ENCODE measurements at regions of chr6 and their contacts with region 1.

Region 1: GRCh38 chr6:42043787-42044475 is 6.4 kb upstream of the TAF8 start:
- DNase-seq: peak; percentile 82 to 87 (median 84)
- ATAC-seq: peak; percentile 70
- H3K4me3 ChIP-seq: no peak overlapping the region
- H3K27ac ChIP-seq: peak overlapping the region in 1 of 4 donors; percentile 96
- H3K4me1 ChIP-seq: peaks cover 45% of the 10 kb centered on the region
- H3K27me3 ChIP-seq: no peaks in the 10 kb centered on the region
- CTCF ChIP-seq: peak; percentile 92 to 97 (median 95)
- POLR2A ChIP-seq: no peak

Region 2: DNA sequence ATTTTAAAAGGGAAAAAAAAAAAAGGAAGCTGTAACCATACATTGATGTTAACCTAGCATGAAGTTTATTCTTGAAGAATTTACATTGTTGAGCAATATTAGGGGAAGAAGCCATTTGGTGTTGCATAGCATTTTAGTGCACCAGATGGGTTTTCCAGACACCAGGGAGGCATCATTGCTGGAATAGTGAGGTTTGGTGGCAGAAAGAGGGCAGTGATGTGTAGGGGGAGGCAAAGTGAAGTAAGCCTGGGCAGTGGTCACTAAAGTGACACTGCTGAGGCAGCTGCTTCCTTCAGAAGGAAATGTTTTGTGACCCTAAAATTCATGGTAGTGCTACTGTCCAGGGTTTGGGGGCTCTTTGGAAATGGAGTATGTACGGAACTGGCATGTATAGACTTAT is 253.9 kb before region 1 on chr6:
- intact Hi-C with region 1: loop called (anchors 5 kb)
- DNase-seq: no peak
- ATAC-seq: no peak
- H3K4me3 ChIP-seq: no peak overlapping the region
- H3K27ac ChIP-seq: no peak overlapping the region
- H3K4me1 ChIP-seq: peaks cover 26% of the 10 kb centered on the region
- H3K27me3 ChIP-seq: no peaks in the 10 kb centered on the region
- CTCF ChIP-seq: no peak
- POLR2A ChIP-seq: no peak

Region 3: DNA sequence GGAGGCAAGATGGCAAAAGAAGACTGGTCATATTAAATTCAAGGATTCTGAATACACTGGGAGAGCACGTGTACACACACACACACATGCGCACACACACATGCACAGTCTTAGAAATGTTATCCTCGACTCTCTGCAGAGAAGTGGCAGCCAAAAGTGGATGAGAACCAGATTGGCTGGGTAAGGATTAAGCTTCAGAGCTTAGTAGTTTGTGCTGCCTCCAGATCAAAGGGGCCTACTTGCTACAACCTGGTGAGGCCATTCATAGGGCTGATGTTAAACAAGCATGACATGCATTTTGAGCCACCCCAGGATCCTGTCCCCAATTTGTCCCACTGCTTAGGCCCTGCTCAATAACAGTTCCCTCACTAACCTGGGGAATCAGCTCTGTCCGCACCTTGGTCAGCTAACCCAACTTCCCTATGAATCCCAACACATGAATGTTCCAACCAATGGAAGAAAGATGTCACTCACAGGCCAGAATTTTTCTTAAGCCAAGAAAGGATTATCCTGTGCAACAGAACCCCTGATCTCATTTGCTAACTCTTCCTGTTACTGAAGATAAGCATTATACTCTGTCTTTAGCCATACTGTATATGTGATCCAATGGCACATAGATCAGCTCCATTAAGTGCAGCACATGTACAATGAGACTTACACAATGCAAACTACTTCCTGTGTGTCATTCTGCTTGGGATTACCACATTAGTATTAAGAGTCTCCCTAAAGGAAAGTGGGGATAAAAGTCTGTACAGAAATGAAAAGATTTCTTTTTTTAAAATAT is 225.5 kb before region 1 on chr6:
- intact Hi-C with region 1: no loop called
- DNase-seq: no peak
- ATAC-seq: no peak
- H3K4me3 ChIP-seq: no peak overlapping the region
- H3K27ac ChIP-seq: no peak overlapping the region
- H3K4me1 ChIP-seq: no peaks in the 10 kb centered on the region
- H3K27me3 ChIP-seq: no peaks in the 10 kb centered on the region
- CTCF ChIP-seq: no peak
- POLR2A ChIP-seq: no peak

Region 4: GRCh38 chr6:41846666-41847237 is 197.2 kb before region 1 on chr6:
- intact Hi-C with region 1: loop called (anchors 5 kb)
- DNase-seq: peak; percentile 69 to 76 (median 72)
- ATAC-seq: peak; percentile 87
- H3K4me3 ChIP-seq: no peak overlapping the region
- H3K27ac ChIP-seq: peak overlapping the region in 2 of 4 donors; percentile 11 to 29
- H3K4me1 ChIP-seq: peaks cover 10% of the 10 kb centered on the region
- H3K27me3 ChIP-seq: no peaks in the 10 kb centered on the region
- CTCF ChIP-seq: peak; percentile 41 to 90 (median 84)
- POLR2A ChIP-seq: no peak

Region 5: GRCh38 chr6:41872147-41872546 is 171.8 kb before region 1 on chr6:
- intact Hi-C with region 1: no loop called
- DNase-seq: no peak
- ATAC-seq: no peak
- H3K4me3 ChIP-seq: no peak overlapping the region
- H3K27ac ChIP-seq: no peak overlapping the region
- H3K4me1 ChIP-seq: no peaks in the 10 kb centered on the region
- H3K27me3 ChIP-seq: no peaks in the 10 kb centered on the region
- CTCF ChIP-seq: no peak
- POLR2A ChIP-seq: no peak

Region 6: DNA sequence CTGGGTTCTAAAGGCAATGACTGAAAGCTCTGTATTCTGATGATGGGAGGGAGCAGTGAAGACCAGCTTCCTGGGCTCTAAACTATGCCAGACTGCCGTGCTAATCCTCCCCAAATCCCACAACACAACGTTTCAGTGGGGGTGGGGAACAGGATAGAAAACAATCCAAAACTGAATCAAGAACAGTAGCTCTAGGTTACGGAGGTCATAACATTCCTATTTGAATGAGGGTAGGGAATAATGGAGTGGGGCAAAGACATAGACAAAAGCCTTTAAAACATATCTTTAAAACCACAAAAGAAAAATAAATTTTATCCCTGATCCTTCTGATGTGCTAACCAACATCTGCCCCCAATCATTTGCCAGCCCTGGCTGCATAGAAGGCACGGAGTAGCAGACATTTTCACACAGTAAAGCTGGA is 156.6 kb before region 1 on chr6:
- intact Hi-C with region 1: no loop called
- DNase-seq: no peak
- ATAC-seq: no peak
- H3K4me3 ChIP-seq: no peak overlapping the region
- H3K27ac ChIP-seq: no peak overlapping the region
- H3K4me1 ChIP-seq: no peaks in the 10 kb centered on the region
- H3K27me3 ChIP-seq: no peaks in the 10 kb centered on the region
- CTCF ChIP-seq: no peak
- POLR2A ChIP-seq: no peak

Region 7: DNA sequence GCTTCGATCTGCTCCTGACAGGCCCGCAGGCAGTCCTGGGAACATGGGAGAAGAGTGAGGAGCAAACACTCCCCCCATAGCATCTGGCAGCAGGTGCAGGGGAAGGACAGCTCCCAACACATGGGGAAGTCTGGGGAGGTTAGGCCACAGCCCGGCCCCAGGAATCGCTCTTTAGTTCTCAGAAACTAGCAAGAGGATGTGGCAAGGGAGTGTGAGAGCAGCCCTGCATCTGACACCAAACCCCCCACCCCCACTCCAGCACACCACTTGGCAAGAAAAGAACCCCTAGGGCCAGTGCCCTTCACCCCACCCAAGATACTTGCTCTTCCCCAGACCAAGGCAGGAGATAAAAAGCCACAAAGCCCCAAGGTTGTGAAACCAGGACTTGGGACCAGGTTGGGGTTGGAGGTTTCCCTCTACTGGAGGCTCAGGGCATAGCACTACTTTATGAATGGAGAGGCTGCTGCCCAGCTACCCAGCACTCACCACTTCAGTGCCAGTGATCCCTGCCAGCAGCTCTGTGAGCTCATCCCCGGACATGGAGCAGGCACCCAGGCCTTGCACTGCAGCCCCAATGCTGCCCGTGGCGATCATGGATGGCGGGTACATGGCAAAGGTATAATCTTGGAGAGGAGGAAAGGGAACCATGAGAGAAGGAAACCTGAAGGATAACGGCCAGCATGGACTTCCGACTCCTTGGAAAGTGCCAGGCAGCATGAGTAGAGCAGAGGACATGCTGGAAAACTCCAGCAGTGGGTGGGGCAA is 107.7 kb before region 1 on chr6:
- intact Hi-C with region 1: loop called (anchors 5 kb)
- DNase-seq: peak; percentile 75 to 83 (median 76)
- ATAC-seq: peak; percentile 83
- H3K4me3 ChIP-seq: no peak overlapping the region
- H3K27ac ChIP-seq: peak overlapping the region in 1 of 4 donors; percentile 50
- H3K4me1 ChIP-seq: peaks cover 38% of the 10 kb centered on the region
- H3K27me3 ChIP-seq: no peaks in the 10 kb centered on the region
- CTCF ChIP-seq: peak; percentile 72 to 85 (median 78)
- POLR2A ChIP-seq: no peak

Region 8: GRCh38 chr6:42520786-42521607 is 477.1 kb after region 1 on chr6:
- intact Hi-C with region 1: no loop called
- DNase-seq: no peak
- ATAC-seq: no peak
- H3K4me3 ChIP-seq: no peak overlapping the region
- H3K27ac ChIP-seq: no peak overlapping the region
- H3K4me1 ChIP-seq: no peaks in the 10 kb centered on the region
- H3K27me3 ChIP-seq: no peaks in the 10 kb centered on the region
- CTCF ChIP-seq: no peak
- POLR2A ChIP-seq: no peak